Dendritic cell treated with granulocyte-macrophage colony-stimulating factor and Interleukin-4, amounts not matched to agents 40 ng/mL and 50 ng/mL, for 4 days (primary cell): ENCODE measurements at regions of chr3 and their contacts with region 1.

Region 1: GRCh38 chr3:46078712-46079400 is 51.6 kb upstream of the XCR1 start:
- H3K4me3 Mint-ChIP-seq: no peak overlapping the region
- H3K27ac Mint-ChIP-seq: no peak overlapping the region
- H3K4me1 Mint-ChIP-seq: peaks cover 41% of the 10 kb centered on the region
- H3K27me3 Mint-ChIP-seq: no peaks in the 10 kb centered on the region

Region 2: DNA sequence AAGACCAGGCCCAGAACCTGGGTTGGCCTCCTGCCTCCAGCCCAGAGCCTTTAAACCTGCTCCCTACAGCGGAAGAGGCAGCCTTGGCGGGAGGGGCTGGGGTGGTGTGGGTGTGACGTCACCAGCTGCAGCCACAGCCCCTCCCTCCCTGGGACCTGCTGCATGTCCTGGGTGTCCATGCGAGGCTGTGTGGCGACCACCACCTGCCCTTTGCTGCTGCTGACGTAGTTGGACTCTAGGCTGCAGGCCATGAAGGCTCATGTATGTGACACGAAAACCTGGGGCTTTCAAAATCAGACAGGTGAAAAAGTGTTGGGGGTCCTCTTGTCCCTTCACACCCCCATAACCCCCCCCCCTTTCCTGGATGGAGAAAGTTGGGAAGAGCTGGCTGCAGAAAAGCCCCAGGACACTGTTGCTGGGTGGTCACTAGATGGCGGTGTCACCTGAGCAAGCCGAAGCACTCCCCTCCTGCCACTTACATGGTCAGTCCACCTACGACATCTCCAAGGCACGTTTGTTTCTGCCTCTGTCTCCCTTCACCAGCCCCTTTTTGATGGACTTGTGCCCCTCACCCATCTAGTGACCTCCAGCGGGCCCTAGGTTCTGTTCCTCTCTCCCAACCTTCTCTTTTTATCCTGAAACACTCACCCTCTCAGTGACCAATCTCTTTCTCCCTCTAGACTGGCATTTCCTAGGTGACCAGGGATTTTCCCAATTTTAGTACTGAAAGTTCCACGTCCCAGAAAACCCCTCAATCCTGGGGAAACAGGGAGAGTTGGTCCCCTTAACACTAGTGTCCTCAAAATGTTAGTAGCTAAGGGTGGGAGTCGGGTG is 317.8 kb before region 1 on chr3:
- intact Hi-C with region 1: loop called (anchors 1 kb)
- H3K4me3 Mint-ChIP-seq: no peak overlapping the region
- H3K27ac Mint-ChIP-seq: no peak overlapping the region
- H3K4me1 Mint-ChIP-seq: peaks cover 5% of the 10 kb centered on the region
- H3K27me3 Mint-ChIP-seq: peaks cover 3% of the 10 kb centered on the region

Region 3: GRCh38 chr3:46038916-46039315 is 39.9 kb before region 1 on chr3:
- intact Hi-C with region 1: no loop called
- H3K4me3 Mint-ChIP-seq: no peak overlapping the region
- H3K27ac Mint-ChIP-seq: no peak overlapping the region
- H3K4me1 Mint-ChIP-seq: peaks cover 12% of the 10 kb centered on the region
- H3K27me3 Mint-ChIP-seq: peaks cover 23% of the 10 kb centered on the region